Transverse colon (tissue), 4 donors: ENCODE measurements at regions of chr5 and their contacts with region 1.

Region 1: GRCh38 chr5:109409844-109410388 is at the start of gene PJA2:
- DNase-seq: peak; percentile 98
- H3K4me3 ChIP-seq: peak within 1 kb of the TSS; percentile 76 to 93 (median 84)
- H3K27ac ChIP-seq: peak within 1 kb of the TSS; percentile 95 to 99 (median 98)
- H3K4me1 ChIP-seq: peaks cover 23 to 64% (median 35%) of the 10 kb centered on the region in 4 donors
- H3K27me3 ChIP-seq: no peaks in the 10 kb centered on the region
- CTCF ChIP-seq: peak; percentile 31 to 75 (median 34)
- EP300 ChIP-seq: no peak
- POLR2A ChIP-seq: peak; percentile 89
- total RNA-seq, gene PJA2: 62.5 to 93.8 (median 78.2) TPM

Region 2: GRCh38 chr5:108381954-108382783 is 1027.7 kb before region 1 on chr5 and contains the start of gene FBXL17:
- in situ Hi-C with region 1: loop called in 1 of 4 experiments (anchors 25 kb)
- intact Hi-C with region 1: no loop called
- DNase-seq: peak; percentile 96
- H3K4me3 ChIP-seq: peak within 1 kb of the TSS; percentile 71 to 86 (median 80)
- H3K27ac ChIP-seq: peak within 1 kb of the TSS; percentile 98 to 99 (median 98)
- H3K4me1 ChIP-seq: peaks cover 0 to 26% (median 14%) of the 10 kb centered on the region in 4 donors
- H3K27me3 ChIP-seq: no peaks in the 10 kb centered on the region
- CTCF ChIP-seq: peak in 1 of 5 experiments; percentile 6
- EP300 ChIP-seq: no peak
- POLR2A ChIP-seq: peak; percentile 84
- total RNA-seq, gene FBXL17: 17.7 to 99.5 (median 24.6) TPM

Region 3: GRCh38 chr5:109354761-109355160 is 55.2 kb before region 1 on chr5:
- in situ Hi-C with region 1: no loop called
- intact Hi-C with region 1: loop called (anchors 10 kb)
- DNase-seq: no peak
- H3K4me3 ChIP-seq: no peak overlapping the region
- H3K27ac ChIP-seq: no peak overlapping the region
- H3K4me1 ChIP-seq: peaks cover 0 to 20% (median 0%) of the 10 kb centered on the region in 4 donors
- H3K27me3 ChIP-seq: no peaks in the 10 kb centered on the region
- CTCF ChIP-seq: no peak
- EP300 ChIP-seq: no peak
- POLR2A ChIP-seq: no peak

Region 4: GRCh38 chr5:109574985-109575384 is 165.1 kb after region 1 on chr5:
- in situ Hi-C with region 1: no loop called
- intact Hi-C with region 1: no loop called
- DNase-seq: no peak
- H3K4me3 ChIP-seq: no peak overlapping the region
- H3K27ac ChIP-seq: no peak overlapping the region
- H3K4me1 ChIP-seq: no peaks in the 10 kb centered on the region
- H3K27me3 ChIP-seq: no peaks in the 10 kb centered on the region
- CTCF ChIP-seq: no peak
- EP300 ChIP-seq: no peak
- POLR2A ChIP-seq: no peak

Region 5: DNA sequence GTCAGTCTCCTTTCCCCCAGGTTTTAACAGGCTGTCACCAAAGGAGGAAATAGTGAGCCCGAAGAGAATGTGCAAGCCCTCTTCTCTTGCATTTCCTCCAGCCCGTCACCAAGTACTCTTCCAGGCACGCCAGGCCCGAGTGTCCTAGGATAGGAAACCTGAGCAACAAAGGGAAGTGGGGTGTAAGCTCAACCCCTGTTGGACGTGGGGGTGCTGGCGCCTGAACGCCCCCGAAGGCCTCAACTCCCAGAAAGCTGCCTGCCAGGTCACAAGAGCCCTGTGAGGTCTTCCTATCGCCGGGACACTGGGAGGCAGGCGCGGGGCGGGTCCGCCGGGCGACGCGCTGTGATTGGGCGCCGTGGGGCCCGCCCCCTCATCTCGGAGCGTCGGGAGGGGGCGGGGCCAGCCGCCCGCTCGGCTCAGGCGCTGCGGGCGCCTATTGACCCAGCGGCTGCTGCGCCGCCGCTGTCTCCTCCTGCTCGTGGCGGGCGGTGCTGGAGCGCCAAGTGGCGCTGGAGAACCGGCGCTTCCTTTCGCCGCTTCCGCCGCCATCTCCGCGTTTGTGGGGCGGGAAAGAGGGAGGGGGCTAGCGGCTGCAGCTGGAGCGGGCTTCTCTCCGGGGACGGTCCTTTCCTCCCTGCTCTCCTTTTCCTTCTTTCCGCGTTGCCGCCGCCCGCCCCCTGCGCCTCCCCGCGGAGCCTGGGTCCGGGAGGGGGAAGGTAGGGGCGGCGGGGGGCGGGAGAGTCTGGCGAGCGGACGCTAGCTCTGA is 279.2 kb after region 1 on chr5:
- in situ Hi-C with region 1: loop called in 1 of 4 experiments (anchors 25 kb)
- intact Hi-C with region 1: no loop called
- DNase-seq: peak; percentile 90
- H3K4me3 ChIP-seq: peak overlapping the region; percentile 88 to 97 (median 96)
- H3K27ac ChIP-seq: peak overlapping the region; percentile 96 to 100 (median 99)
- H3K4me1 ChIP-seq: peaks cover 17 to 41% (median 23%) of the 10 kb centered on the region in 4 donors
- H3K27me3 ChIP-seq: no peaks in the 10 kb centered on the region
- CTCF ChIP-seq: peak in 1 of 5 experiments; percentile 20
- EP300 ChIP-seq: no peak
- POLR2A ChIP-seq: peak; percentile 90